Panc1 (cell line): ENCODE measurements at regions of chr5 and their contacts with region 1.

Region 1: DNA sequence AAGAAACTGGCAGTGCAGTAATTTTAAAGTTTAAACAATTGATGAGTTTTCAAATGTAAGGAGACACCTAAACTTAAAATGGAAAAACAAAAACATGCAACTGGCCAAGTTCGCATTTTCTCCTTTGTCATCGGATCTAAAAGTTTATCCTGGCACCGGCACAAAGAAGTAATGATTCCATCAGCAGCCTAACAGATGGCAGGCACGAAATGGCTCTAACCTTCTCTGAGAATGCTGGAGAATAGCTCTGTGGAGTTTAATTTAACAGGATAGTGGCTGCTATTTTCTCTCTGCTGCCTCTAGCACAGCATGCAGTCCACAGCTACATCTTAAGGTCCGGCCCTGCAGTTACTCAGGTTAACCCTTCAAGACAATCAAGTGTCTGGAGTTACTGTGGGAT is 82.2 kb downstream of the PRELID2 start:
- DNase-seq: no peak
- ATAC-seq: no peak; the same call in 1 of the 2 replicates
- H3K4me3 ChIP-seq: no peak overlapping the region
- H3K27ac ChIP-seq: no peak overlapping the region
- H3K4me1 ChIP-seq: no peaks in the 10 kb centered on the region
- H3K27me3 ChIP-seq: no peaks in the 10 kb centered on the region
- CTCF ChIP-seq: no peak

Region 2: GRCh38 chr5:145130996-145131395 is 622.0 kb before region 1 on chr5:
- CTCF ChIA-PET with region 1: no interaction called
- POLR2A ChIA-PET with region 1: no interaction called
- in situ Hi-C with region 1: no loop called
- intact Hi-C with region 1: no loop called
- DNase-seq: no peak
- ATAC-seq: no peak
- H3K4me3 ChIP-seq: no peak overlapping the region
- H3K27ac ChIP-seq: no peak overlapping the region
- H3K4me1 ChIP-seq: no peaks in the 10 kb centered on the region
- H3K27me3 ChIP-seq: no peaks in the 10 kb centered on the region
- CTCF ChIP-seq: no peak

Region 3: GRCh38 chr5:145637396-145637795 is 115.6 kb before region 1 on chr5:
- CTCF ChIA-PET with region 1: no interaction called
- POLR2A ChIA-PET with region 1: no interaction called
- in situ Hi-C with region 1: no loop called
- intact Hi-C with region 1: no loop called
- DNase-seq: no peak
- ATAC-seq: no peak
- H3K4me3 ChIP-seq: no peak overlapping the region
- H3K27ac ChIP-seq: no peak overlapping the region
- H3K4me1 ChIP-seq: no peaks in the 10 kb centered on the region
- H3K27me3 ChIP-seq: no peaks in the 10 kb centered on the region
- CTCF ChIP-seq: no peak

Region 4: DNA sequence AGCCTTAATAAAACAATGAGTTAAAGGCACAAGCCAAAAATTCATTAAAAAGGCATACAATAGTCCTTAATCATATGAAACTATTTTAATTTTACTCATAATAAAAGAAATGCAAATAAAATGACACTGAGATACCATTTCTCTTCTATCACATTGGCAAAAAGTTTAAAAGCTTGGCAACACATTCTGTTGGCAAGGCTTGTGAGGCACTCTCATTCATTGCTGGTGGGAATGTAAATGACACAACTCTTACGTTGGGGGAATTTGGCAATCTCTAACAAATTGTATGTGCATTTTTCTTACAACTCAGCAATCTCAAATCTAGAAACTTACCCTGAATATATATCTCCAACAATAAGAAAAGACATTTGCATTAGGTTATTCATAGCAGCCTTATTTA is 29.4 kb before region 1 on chr5:
- CTCF ChIA-PET with region 1: interaction called, 13 read pairs
- POLR2A ChIA-PET with region 1: no interaction called
- in situ Hi-C with region 1: no loop called
- intact Hi-C with region 1: no loop called
- DNase-seq: no peak
- ATAC-seq: no peak
- H3K4me3 ChIP-seq: no peak overlapping the region
- H3K27ac ChIP-seq: no peak overlapping the region
- H3K4me1 ChIP-seq: no peaks in the 10 kb centered on the region
- H3K27me3 ChIP-seq: no peaks in the 10 kb centered on the region
- CTCF ChIP-seq: no peak